A673 (cell line): ENCODE measurements at regions of chr14 and their contacts with region 1.

Region 1: DNA sequence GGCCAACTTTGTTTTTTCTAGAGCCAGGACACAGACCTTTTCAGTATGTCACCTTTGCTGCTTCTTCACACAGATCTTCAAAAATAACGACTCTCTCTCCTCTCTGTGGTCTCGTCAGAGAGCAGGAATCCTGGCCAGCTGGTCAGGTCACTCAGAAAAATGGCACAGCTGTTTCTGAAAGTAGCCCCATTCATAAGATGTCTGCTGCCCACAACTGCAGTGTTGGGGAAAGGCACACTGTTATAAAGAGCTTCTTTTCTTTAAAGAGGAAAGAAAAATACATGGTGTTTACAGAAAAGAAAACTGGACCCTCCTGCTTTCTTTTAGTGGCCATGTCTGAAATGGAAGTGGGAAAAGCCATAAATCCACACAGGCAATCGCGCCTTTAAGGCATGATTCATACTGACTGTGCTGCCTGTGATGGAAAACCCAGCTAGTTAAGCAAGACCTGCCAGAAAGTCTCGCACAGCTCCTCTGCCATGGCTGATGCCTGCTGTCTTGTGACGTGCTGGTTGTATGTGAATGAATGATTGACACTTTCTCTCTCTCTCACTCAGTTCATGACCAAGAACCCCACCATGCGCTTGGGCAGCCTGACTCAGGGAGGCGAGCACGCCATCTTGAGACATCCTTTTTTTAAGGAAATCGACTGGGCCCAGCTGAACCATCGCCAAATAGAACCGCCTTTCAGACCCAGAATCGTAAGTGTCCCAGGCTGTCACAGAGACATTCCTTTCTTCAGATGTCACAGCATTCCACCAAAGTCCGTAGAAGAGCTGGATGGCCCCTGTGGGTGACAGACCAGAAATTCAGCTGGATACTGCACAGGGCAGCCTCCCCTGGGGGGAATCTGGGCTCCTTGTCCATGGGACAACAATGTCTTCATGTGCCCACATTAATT is 147.9 kb upstream of the HIF1A start:
- DNase-seq: no peak
- H3K4me3 ChIP-seq: no peak overlapping the region
- H3K27ac ChIP-seq: no peak overlapping the region
- H3K4me1 ChIP-seq: no peaks in the 10 kb centered on the region
- H3K27me3 ChIP-seq: no peaks in the 10 kb centered on the region
- CTCF ChIP-seq: no peak

Region 2: GRCh38 chr14:61533511-61534510 is 13.6 kb before region 1 on chr14:
- CTCF ChIA-PET with region 1: no interaction called
- POLR2A ChIA-PET with region 1: no interaction called
- intact Hi-C with region 1: no loop called
- DNase-seq: no peak
- H3K4me3 ChIP-seq: no peak overlapping the region
- H3K27ac ChIP-seq: no peak overlapping the region
- H3K4me1 ChIP-seq: peaks cover 9% of the 10 kb centered on the region
- H3K27me3 ChIP-seq: no peaks in the 10 kb centered on the region
- CTCF ChIP-seq: no peak

Region 3: GRCh38 chr14:61623927-61624326 is 76.5 kb after region 1 on chr14:
- CTCF ChIA-PET with region 1: interaction called, 13 read pairs
- POLR2A ChIA-PET with region 1: no interaction called
- intact Hi-C with region 1: no loop called
- DNase-seq: no peak
- H3K4me3 ChIP-seq: no peak overlapping the region
- H3K27ac ChIP-seq: no peak overlapping the region
- H3K4me1 ChIP-seq: no peaks in the 10 kb centered on the region
- H3K27me3 ChIP-seq: no peaks in the 10 kb centered on the region
- CTCF ChIP-seq: no peak

Region 4: DNA sequence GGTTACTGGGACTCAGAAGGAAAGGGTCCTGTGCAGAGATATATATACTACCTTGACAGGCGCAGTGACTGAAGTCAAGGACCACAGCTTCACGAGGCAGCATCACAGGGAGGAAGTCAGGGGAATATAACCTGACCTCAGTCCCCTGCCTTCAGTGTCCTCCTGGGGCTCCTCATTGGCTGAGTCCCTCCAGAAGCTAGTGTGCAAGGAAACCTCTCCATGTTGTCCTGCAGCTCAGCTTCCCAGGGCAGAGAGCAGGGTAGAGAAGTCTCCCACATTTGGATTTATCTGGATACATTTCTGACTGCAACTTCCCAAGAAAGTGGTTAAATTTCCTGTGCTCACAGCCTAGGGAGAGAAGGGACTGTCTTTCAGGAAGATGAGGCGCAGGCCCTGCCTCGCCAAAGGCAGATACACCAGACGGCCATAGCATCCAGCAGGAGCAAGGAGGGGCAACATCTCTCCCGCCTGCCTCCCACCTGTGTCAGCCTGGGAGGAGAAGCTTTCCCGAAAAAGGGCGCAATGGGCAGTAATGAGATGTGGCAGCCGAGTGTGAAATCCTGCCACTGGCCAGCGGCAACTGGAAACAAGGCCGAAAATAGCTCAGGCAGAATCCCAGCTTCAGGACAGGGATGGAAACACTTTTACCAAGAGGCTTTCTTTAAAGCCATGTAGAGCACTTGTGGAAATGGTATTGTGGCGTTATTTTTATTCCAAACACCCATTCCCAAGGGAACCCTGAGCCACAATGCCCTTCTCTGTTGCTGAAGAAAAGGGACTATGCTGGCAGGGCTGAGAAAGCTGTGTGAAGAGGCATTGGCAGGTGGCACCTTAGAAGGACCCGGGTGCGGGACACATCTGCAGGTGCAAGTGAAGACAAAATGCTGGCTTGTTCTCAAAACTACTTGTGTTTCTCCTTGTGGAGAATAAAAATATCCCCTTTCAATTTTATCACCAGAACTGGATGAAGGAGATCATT is 93.0 kb after region 1 on chr14:
- CTCF ChIA-PET with region 1: no interaction called
- POLR2A ChIA-PET with region 1: interaction called, 20 read pairs
- intact Hi-C with region 1: no loop called
- DNase-seq: no peak
- H3K4me3 ChIP-seq: no peak overlapping the region
- H3K27ac ChIP-seq: no peak overlapping the region
- H3K4me1 ChIP-seq: no peaks in the 10 kb centered on the region
- H3K27me3 ChIP-seq: no peaks in the 10 kb centered on the region
- CTCF ChIP-seq: no peak

Region 5: DNA sequence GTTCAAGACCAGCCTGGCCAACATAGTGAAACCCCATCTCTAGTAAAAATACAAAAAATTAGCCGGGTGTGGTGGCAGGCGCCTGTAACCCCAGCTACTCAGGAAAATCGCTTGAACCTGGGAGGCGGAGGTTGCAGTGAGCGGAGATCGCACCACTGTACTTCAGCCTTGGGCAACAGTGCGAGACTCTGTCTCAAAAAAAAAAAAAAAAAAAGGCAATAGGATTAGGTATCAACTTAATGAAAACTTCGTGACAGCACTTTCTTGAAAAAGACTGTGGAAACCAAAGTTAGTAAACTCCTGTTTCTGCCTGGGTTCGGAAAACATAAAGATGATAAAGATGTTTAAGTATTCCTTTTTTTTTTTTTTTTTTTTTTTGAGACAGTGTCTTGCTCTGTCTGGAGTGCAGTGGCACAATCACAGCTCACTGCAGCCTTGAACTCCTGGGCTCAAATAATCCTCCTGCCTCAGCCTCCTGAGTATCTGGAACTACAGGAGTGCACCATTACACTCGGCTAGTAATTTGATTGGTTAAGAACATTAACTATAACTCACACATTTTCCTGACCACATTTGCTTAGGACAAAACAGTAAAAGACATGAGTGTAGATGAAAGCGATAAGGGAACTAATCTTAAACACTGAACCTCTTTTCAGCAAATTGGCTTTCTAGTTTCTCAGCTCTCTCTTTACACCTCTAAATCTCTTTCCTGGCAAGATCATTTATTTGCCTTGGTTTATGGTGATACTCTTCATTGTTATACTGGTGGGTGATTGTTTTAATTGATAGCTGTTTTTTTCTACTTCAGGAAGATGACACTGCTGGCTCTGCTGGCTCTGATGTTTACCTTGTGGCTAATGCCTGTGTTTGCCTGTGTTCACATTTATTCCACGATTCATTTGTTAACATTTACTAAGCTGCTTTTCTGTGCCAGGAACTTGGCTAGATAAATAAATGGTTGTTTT is 163.7 kb after region 1 on chr14:
- CTCF ChIA-PET with region 1: no interaction called
- POLR2A ChIA-PET with region 1: interaction called, 11 read pairs
- intact Hi-C with region 1: no loop called
- DNase-seq: no peak
- H3K4me3 ChIP-seq: no peak overlapping the region
- H3K27ac ChIP-seq: no peak overlapping the region
- H3K4me1 ChIP-seq: peaks cover 35% of the 10 kb centered on the region
- H3K27me3 ChIP-seq: no peaks in the 10 kb centered on the region
- CTCF ChIP-seq: no peak

Region 6: GRCh38 chr14:63524537-63525155 is 1977.2 kb after region 1 on chr14:
- CTCF ChIA-PET with region 1: no interaction called
- POLR2A ChIA-PET with region 1: no interaction called
- intact Hi-C with region 1: no loop called
- DNase-seq: no peak
- H3K4me3 ChIP-seq: no peak overlapping the region
- H3K27ac ChIP-seq: no peak overlapping the region
- H3K4me1 ChIP-seq: peaks cover 11% of the 10 kb centered on the region
- H3K27me3 ChIP-seq: no peaks in the 10 kb centered on the region
- CTCF ChIP-seq: no peak